Activated CD4-positive, alpha-beta T cell treated with anti-CD3 and anti-CD28 coated beads, Interleukin-2, amount 10 ng/mL, durations not matched to agents 24 days and 14 days (primary cell): ENCODE measurements at regions of chr13 and their contacts with region 1.

Region 1: DNA sequence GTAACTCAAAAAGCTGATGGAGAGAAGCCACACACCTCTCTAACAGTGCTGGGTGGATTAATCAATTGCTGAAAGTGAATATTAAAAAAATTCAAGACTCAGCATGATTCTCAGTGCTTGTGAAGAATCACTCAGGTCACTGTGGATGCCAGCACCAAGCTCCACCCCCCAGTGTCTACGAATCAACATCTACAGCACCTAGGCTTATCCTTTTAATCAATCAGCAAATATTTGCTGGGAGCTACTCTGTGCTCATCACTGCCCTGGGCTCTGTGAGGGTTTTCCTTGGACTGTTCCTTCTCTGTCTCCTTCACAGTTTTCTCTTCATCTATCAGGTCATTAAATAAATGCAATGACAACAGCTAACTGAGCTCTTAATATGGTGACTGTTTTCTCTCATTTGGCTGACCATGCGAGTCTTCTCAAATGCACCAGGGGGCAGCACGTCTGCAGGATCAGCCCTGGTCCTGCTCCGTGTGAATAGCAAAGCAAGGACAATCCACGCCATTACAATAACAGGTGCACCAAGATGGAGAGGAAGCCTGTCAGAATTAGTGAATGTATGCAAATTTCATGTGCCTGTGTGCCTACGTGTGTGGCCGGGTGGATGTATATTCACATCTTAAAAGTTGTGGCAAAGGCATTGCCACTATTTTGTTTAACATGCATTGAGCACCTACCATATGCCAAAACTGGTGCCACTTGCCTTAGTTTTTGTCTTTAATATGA is 14.6 kb upstream of the C13orf42 start:
- DNase-seq: peak; percentile 85
- H3K4me3 Mint-ChIP-seq: no peak overlapping the region
- H3K27ac Mint-ChIP-seq: no peak overlapping the region
- H3K4me1 Mint-ChIP-seq: peaks cover 15% of the 10 kb centered on the region
- H3K27me3 Mint-ChIP-seq: peaks cover 15% of the 10 kb centered on the region

Region 2: GRCh38 chr13:51797664-51798488 is 672.2 kb after region 1 on chr13:
- intact Hi-C with region 1: loop called (anchors 1 kb)
- DNase-seq: peak; percentile 89
- H3K4me3 Mint-ChIP-seq: no peak overlapping the region
- H3K27ac Mint-ChIP-seq: no peak overlapping the region
- H3K4me1 Mint-ChIP-seq: peaks cover 35% of the 10 kb centered on the region
- H3K27me3 Mint-ChIP-seq: no peaks in the 10 kb centered on the region